Posterior cingulate gyrus (tissue), 11 donors: ENCODE measurements at regions of chr1 and their contacts with region 1.

Region 1: GRCh38 chr1:56831871-56832693 is 12.9 kb upstream of the FYB2 start:
- DNase-seq: peak; percentile 22 to 96 (median 71)

Region 2: DNA sequence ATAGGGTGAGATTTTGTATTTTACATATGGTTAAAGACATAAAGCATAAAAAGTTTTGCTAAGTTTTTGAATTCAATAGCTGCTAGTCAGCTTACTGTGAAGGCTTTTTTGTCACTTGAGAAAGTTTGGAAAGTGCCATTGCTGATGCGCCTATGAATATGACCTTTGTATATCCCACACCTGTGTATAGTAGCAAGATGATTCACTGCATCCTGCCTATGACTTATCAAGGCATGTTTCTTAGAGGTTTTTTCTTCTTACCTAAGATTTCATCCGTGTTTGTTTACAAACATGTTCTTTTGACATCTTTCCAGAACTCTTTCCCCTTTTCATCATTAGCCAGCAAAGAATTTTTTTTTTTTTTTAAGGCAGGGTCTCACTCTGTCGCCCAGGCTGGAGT is 135.4 kb before region 1 on chr1:
- intact Hi-C with region 1: no loop called
- DNase-seq: no peak

Region 3: GRCh38 chr1:56774067-56774609 is 57.9 kb before region 1 on chr1:
- intact Hi-C with region 1: no loop called
- DNase-seq: no peak

Region 4: GRCh38 chr1:56798053-56798471 is 34.0 kb before region 1 on chr1:
- intact Hi-C with region 1: no loop called
- DNase-seq: no peak

Region 5: GRCh38 chr1:57061369-57061768 is 229.3 kb after region 1 on chr1:
- intact Hi-C with region 1: loop called (anchors 1 kb)
- DNase-seq: no peak

Region 6: DNA sequence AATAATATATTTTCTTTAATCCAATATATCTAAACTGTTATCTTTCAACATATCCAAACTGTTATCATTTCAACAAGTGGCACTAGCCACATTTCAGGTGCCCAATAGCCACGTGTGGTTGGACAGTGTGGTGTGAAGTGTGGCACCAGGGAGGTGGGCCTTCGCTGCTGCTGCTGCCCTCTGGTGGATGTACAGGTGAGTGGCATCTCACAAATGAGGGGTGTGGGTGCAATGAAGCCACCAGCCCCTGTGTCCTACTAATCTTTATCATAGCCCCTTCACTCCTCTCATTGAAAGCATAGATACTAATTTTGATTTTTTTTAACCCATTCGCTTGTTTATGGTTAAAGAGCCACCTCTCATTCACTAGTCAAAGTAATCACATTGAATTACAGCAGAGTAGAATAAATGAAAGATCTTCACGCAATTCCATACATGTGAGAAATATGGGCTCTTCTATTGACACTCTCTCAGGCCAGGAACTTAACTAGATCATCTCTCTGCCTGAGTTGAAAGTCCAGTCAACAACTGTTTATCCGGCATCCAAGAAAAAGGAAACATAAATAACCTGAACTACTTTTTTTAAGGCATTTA is 1215.3 kb after region 1 on chr1:
- intact Hi-C with region 1: loop called (anchors 5 kb)
- DNase-seq: peak in 4 of 10 donors; percentile 16 to 86 (median 22)

Region 7: DNA sequence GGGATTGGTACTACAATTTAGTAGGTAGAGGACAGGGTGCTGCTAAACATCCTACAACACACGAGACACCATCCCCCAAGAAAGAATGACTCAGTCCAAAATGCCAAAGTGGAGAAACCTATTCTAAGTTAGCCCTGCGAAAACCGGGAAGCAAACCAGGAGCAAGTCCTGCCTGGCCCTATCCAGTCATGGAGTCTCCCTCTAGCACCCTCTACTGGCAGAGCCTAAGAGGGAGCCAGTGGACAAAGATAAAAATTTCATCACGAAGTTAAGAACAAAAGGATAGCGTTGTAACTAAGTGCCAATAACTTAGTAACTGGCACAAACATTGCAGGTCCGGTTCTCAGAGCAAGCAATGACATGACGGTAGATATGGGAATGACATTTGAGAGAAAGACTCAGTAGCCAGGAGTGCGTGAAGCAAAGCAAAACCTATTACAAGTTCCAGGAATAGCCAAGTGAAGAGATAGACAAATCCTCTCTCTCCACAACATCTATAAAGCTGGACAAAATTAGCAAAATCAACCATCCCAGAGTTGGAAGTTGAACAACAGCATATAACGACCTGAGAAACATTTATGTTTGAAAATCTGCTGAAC is 1331.0 kb after region 1 on chr1:
- intact Hi-C with region 1: loop called (anchors 5 kb)
- DNase-seq: peak in 7 of 10 donors; percentile 14 to 85 (median 54)